Activated T-helper 1 cell treated with anti-CD3 and anti-CD28 coated beads, Interleukin-12 subunit alpha, Interleukin-12 subunit beta, Interleukin-2, Interleukin-4 antibody, amounts not matched to agents 30 ng/mL and 10 ng/mL and 1 ng/mL, durations not matched to agents 14 hours and 24 hours and 36 hours (primary cell): ENCODE measurements at regions of chr2 and their contacts with region 1.

Region 1: DNA sequence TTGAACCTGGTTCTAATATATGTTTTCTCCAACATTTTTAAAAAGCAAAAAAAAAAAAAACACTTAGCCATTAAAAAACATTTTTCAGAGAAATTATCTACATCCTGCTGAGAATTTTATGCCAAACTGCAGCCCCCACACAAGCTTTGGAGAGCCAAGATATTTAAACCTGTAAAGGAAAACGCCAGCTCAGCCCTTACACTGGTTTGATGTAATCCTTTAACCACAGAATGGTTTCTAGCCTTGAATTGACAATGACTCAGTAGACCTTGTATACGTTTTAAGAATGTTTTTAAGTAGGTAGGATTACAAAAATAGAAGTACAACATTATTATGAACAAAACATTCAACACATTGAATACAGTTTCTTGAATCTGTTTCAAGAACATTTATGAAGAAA is 113.6 kb downstream of the BABAM2 start:
- DNase-seq: no peak
- H3K4me3 Mint-ChIP-seq: no peak overlapping the region
- H3K27ac Mint-ChIP-seq: no peak overlapping the region
- H3K4me1 Mint-ChIP-seq: peaks cover 31% of the 10 kb centered on the region
- H3K27me3 Mint-ChIP-seq: no peaks in the 10 kb centered on the region

Region 2: GRCh38 chr2:27960237-27960912 is 43.7 kb before region 1 on chr2:
- intact Hi-C with region 1: loop called (anchors 5 kb)
- DNase-seq: peak; percentile 23
- H3K4me3 Mint-ChIP-seq: peak overlapping the region; percentile 37
- H3K27ac Mint-ChIP-seq: peak overlapping the region; percentile 57
- H3K4me1 Mint-ChIP-seq: peaks cover 82% of the 10 kb centered on the region
- H3K27me3 Mint-ChIP-seq: no peaks in the 10 kb centered on the region

Region 3: DNA sequence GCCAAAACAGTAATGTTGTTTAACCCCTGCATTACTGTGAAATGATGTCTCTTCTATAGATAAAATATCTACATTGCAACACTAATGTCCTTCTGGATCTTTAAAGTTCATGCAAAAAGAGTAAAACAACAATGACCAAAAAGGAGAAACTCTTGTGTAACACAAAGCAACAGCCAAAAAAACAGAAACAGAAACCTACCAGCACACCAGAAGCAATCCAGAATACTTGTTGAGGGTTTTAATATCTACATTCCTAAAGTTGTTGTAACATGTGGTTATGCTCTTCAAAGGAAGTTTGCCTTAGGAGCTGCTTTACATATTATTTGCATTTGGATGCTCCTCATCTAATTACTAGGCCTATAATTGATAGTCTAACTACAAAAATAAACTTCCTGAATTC is 43.6 kb after region 1 on chr2:
- intact Hi-C with region 1: no loop called
- DNase-seq: no peak
- H3K4me3 Mint-ChIP-seq: no peak overlapping the region
- H3K27ac Mint-ChIP-seq: peak overlapping the region; percentile 27
- H3K4me1 Mint-ChIP-seq: peaks cover 18% of the 10 kb centered on the region
- H3K27me3 Mint-ChIP-seq: no peaks in the 10 kb centered on the region

Region 4: GRCh38 chr2:28311660-28312249 is 307.7 kb after region 1 on chr2:
- intact Hi-C with region 1: no loop called
- DNase-seq: no peak
- H3K4me3 Mint-ChIP-seq: no peak overlapping the region
- H3K27ac Mint-ChIP-seq: no peak overlapping the region
- H3K4me1 Mint-ChIP-seq: peaks cover 15% of the 10 kb centered on the region
- H3K27me3 Mint-ChIP-seq: no peaks in the 10 kb centered on the region